Lower leg skin (tissue), 4 donors: ENCODE measurements at regions of chr3 and their contacts with region 1.

Region 1: GRCh38 chr3:48548729-48549705 is 7.6 kb downstream of the PFKFB4 start:
- DNase-seq: peak; percentile 81 to 98
- H3K4me3 ChIP-seq: no peak overlapping the region
- CTCF ChIP-seq: peak in 1 of 3 donors; percentile 81
- POLR2A ChIP-seq: no peak

Region 2: GRCh38 chr3:48465531-48466378 is 83.3 kb before region 1 on chr3:
- intact Hi-C with region 1: loop called (anchors 10 kb)
- DNase-seq: peak; percentile 99
- H3K4me3 ChIP-seq: peak overlapping the region; percentile 32
- CTCF ChIP-seq: peak in 1 of 3 donors; percentile 74
- POLR2A ChIP-seq: peak in 1 of 2 donors; percentile 24

Region 3: DNA sequence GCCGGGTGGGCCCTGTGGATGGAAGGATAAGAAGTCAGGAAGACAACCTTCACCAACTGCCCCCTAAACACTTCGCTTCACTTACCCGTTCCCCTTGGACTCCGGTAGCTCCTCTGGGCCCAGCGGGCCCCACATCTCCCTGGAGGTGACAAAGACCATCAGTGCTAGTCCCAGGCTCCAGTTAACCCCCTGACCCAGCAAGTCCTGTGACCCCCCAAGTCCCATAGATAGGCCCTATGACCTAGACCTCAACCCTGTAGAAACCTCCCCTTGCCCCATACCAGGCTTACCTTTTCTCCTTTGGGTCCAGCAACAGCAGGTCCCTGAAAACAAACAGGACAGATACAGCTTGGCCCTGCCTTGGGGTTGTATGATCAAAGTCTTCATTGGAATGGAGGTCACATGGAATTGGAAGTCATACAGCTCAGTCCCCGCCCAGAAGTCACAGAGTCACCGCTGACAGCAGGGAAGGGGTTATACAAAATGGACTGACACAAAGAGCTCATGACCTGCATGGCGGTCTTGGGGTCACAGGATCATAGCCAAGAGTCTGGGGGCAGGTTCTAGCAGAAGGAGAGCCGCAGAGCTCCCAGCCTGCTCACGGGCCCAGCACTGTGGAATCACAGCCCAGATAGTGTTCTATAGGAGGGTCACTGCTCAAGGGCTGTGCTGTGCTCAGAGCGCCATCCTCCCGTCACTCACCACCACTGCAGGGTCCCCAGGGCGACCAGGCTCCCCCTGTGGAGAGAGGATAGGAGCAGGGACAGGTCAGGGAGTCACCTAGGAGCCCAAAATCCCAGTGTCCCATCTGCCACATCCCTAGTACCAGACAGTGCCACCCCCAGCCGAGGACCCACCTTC is 32.8 kb after region 1 on chr3:
- intact Hi-C with region 1: loop called (anchors 1 kb)
- DNase-seq: no peak
- H3K4me3 ChIP-seq: no peak overlapping the region
- CTCF ChIP-seq: no peak
- POLR2A ChIP-seq: no peak